SK-N-SH (cell line): ENCODE measurements at regions of chr6 and their contacts with region 1.

Region 1: DNA sequence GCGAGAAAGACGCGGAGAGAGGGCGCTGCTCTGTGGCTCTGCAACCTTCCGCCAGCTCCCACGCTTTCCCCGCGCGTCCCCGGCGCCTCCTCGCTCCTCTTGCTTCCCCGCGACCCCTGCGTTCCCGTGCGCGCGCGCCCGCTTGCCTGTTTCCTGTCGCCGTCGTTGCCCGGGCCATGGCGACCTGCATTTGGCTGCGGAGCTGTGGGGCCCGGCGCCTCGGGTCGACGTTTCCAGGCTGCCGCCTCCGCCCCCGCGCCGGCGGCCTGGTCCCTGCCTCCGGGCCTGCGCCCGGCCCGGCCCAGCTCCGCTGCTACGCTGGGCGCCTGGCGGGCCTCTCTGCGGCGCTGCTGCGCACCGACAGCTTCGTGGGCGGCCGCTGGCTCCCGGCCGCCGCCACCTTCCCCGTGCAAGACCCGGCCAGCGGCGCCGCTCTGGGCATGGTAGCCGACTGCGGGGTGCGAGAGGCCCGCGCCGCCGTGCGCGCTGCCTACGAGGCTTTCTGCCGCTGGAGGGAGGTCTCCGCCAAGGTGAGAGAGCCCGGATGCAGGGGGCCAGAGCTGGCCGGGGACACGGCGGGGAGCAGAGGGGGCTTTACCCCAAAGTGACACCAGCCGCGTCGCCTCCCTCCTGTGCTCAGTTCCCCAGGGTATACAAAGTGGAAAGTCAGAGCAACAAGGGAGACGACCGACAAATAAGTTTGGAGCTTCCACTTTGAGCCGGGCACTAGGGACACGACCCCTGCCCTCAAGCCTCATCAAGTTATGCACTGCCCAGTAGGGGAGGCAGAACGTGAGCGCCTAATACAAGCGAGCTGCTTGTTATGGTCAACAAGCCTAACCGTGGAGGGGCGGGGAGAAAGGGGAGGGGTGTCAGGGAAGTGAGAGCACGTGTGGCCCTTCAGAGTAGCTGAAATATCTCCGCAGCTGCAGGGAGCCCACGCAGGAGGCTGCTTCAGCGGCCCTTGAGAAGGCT is at the start of gene ALDH5A1:
- DNase-seq: peak; percentile 88
- H3K4me3 ChIP-seq: peak within 1 kb of the TSS; percentile 65 to 69
- H3K27ac ChIP-seq: peak within 1 kb of the TSS; percentile 28 to 67
- H3K4me1 ChIP-seq: peaks cover 0 to 10% of the 10 kb centered on the region in 2 experiments; a peak in 1 of 4 replicates
- H3K27me3 ChIP-seq: no peaks in the 10 kb centered on the region
- CTCF ChIP-seq: no peak; the same call in none of the 2 replicates
- EP300 ChIP-seq: no peak
- RAD21 ChIP-seq: peak; percentile 43
- polyA plus RNA-seq, gene ALDH5A1: 3.0 and 3.7 TPM in 2 replicates

Region 2: DNA sequence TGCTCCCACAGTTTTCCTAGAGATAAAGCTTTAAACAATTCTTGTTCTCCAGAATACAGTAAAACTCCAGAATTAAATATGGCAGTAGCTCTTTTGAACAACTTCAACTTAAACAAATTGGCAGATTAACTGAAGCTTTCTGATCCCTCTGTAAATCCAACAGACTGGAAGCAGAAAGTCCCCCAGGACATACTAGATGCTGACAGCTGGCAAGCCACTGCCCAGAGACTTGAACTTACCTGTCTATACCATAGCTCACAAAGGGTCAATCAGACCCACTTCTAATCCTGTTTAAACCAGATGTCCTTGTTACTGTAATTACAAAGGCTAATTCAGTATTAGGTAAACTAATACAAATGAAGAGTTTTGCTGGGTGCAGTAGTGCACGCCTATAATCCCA is 18.0 kb before region 1 on chr6:
- CTCF ChIA-PET with region 1: interaction called, 20 read pairs
- POLR2A ChIA-PET with region 1: no interaction called
- DNase-seq: no peak
- H3K4me3 ChIP-seq: no peak overlapping the region
- H3K27ac ChIP-seq: no peak overlapping the region
- H3K4me1 ChIP-seq: no peaks in the 10 kb centered on the region
- H3K27me3 ChIP-seq: no peaks in the 10 kb centered on the region
- CTCF ChIP-seq: no peak
- EP300 ChIP-seq: no peak
- RAD21 ChIP-seq: no peak

Region 3: DNA sequence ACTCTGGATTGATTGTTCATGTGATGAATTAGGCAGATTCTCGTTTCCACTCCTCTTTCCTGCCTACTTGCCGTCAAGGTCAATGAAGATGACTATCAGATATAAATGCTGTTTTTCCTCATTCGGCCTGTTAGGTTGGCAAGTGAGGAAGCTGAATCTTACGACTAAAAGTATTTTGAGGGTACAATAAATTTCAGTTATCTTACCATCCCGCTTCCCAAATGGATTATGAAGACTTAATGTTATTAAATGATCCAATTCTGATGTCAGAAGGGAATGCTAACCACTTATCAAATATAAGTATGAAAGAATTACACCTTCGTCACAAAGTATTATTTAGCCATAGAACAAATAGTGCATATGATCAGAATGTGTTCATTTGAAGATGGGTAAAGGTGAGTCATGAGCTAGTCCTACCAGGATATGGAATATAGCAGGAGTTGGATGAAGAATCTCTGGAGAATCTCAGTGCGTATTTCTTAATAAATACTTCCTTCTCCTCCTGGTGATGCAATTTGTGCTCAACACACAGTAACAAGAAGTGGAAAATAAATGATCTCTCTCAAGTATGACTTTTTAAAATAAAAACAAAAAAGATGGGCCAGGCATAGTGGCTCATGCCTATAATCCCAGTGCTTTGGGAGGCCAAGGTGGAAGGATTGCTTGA is 10.3 kb before region 1 on chr6:
- CTCF ChIA-PET with region 1: interaction called, 21 read pairs
- POLR2A ChIA-PET with region 1: no interaction called
- DNase-seq: no peak
- H3K4me3 ChIP-seq: no peak overlapping the region
- H3K27ac ChIP-seq: no peak overlapping the region
- H3K4me1 ChIP-seq: no peaks in the 10 kb centered on the region
- H3K27me3 ChIP-seq: no peaks in the 10 kb centered on the region
- CTCF ChIP-seq: no peak
- EP300 ChIP-seq: no peak
- RAD21 ChIP-seq: no peak

Region 4: GRCh38 chr6:24520929-24521546 is 25.9 kb after region 1 on chr6:
- CTCF ChIA-PET with region 1: interaction called, 34 read pairs
- POLR2A ChIA-PET with region 1: no interaction called
- DNase-seq: peak; percentile 63
- H3K4me3 ChIP-seq: no peak overlapping the region
- H3K27ac ChIP-seq: no peak overlapping the region
- H3K4me1 ChIP-seq: no peaks in the 10 kb centered on the region
- H3K27me3 ChIP-seq: no peaks in the 10 kb centered on the region
- CTCF ChIP-seq: peak; percentile 71
- EP300 ChIP-seq: no peak
- RAD21 ChIP-seq: peak; percentile 63

Region 5: GRCh38 chr6:24766680-24767462 is 271.8 kb after region 1 on chr6:
- CTCF ChIA-PET with region 1: no interaction called
- POLR2A ChIA-PET with region 1: no interaction called
- DNase-seq: peak; percentile 36
- H3K4me3 ChIP-seq: no peak overlapping the region
- H3K27ac ChIP-seq: no peak overlapping the region
- H3K4me1 ChIP-seq: no peaks in the 10 kb centered on the region
- H3K27me3 ChIP-seq: no peaks in the 10 kb centered on the region
- CTCF ChIP-seq: peak; percentile 67
- EP300 ChIP-seq: no peak
- RAD21 ChIP-seq: peak; percentile 53